ENCODE measurements at regions of chr19 and their contacts with region 1.

Region 1: DNA sequence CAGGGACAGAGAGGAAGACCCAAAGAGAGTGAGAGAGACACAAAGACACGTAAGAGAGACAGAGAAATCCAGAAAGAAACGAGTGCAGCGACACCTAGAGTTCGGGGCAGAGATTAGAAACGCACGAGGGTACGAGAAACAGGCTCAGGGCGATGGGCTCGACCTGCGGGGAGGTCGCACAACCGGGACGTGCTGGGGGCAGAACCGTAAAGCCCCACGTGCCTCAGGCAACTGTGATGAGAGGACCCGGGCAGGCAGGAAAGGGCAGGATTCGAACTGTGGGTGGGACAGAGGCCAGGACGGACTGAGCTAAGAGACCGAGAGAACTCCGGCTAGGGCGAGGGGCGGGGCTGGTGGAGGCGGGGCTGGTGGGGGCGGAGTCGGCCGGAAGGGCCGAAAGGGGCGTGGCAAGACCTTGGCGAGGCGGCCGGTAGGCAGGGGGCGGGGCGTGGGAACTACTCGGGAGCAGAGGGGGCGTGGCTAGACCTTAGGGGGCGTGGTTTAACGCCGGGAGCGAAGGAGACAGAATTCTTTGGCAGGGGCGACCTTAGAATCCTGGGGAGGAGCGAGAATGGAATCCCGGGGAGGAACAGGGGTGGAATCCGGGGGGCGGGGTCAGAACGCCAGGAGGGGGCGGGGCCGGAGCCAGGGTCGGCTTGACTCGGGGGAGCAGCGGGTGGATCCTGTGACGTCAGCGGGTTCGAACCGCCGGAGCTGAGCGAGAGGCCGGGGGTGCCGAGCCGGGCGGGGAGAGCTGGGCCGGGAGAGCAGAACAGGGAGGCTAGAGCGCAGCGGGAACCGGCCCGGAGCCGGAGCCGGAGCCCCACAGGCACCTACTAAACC is at the start of gene NECTIN2:
- DNase-seq: peak; percentile 97 to 100
- H3K4me3 ChIP-seq: peak within 1 kb of the TSS; percentile 97 to 99
- H3K27ac ChIP-seq: peak within 1 kb of the TSS; percentile 96 to 98
- H3K4me1 ChIP-seq: peaks cover 8 to 26% of the 10 kb centered on the region in 2 donors
- H3K27me3 ChIP-seq: no peaks in the 10 kb centered on the region
- CTCF ChIP-seq: peak; percentile 73 to 82 (median 80)
- total RNA-seq, gene NECTIN2: 125 TPM

Region 2: GRCh38 chr19:44782729-44783128 is 63.1 kb before region 1 on chr19:
- intact Hi-C with region 1: loop called (anchors 1 kb)
- DNase-seq: no peak
- H3K4me3 ChIP-seq: no peak overlapping the region
- H3K27ac ChIP-seq: no peak overlapping the region
- H3K4me1 ChIP-seq: peaks cover 0 to 3% of the 10 kb centered on the region in 2 donors
- H3K27me3 ChIP-seq: no peaks in the 10 kb centered on the region
- CTCF ChIP-seq: no peak

Region 3: GRCh38 chr19:44808463-44809371 is 37.1 kb before region 1 on chr19 and contains the start of gene BCAM:
- intact Hi-C with region 1: loop called (anchors 2 kb)
- DNase-seq: peak in 1 of 2 donors; percentile 87
- H3K4me3 ChIP-seq: peak within 1 kb of the TSS; percentile 74 to 88
- H3K27ac ChIP-seq: peak within 1 kb of the TSS; percentile 77 to 79
- H3K4me1 ChIP-seq: peaks cover 7 to 40% of the 10 kb centered on the region in 2 donors
- H3K27me3 ChIP-seq: no peaks in the 10 kb centered on the region
- CTCF ChIP-seq: no peak
- total RNA-seq, gene BCAM: 832 TPM

Region 4: DNA sequence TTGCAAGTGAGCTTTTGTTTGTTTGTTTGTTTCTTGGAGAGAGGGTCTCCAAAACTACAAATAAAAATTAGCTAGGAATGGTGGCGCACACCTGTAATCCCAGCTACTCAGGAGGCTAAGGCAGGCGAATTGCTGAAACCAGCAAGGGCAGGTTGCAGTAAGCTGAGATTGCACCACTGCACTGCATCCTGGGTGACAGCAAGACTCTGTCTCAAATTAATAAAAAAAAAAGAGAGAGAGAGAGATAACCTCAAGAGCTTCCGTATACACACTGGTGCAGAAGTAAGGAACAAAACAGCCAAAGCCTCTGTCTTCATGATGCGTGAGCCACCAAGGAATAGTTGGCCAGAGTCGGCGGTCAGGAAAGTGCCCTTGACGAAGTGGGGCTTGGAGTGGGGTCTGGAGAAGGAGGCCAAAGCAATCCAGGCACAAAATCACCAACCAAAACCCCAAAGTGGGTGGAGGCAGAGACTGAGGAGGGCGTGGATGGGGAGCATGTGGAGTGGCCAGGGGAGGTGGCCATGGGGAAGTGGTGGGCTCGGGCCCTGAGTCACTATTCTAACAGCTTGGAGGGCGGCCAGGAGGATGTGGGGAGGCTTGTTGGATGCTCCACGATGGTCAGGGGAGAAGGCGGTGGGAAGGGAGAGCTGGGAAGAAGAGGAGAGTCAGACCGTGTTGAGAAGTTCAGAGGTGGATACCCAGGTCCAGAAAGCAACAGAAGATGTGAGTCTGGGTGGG is 24.1 kb after region 1 on chr19:
- intact Hi-C with region 1: no loop called
- DNase-seq: peak in 1 of 2 donors; percentile 81
- H3K4me3 ChIP-seq: no peak overlapping the region
- H3K27ac ChIP-seq: peak overlapping the region in 1 of 2 donors; percentile 45
- H3K4me1 ChIP-seq: no peaks in the 10 kb centered on the region
- H3K27me3 ChIP-seq: no peaks in the 10 kb centered on the region
- CTCF ChIP-seq: no peak

Region 5: GRCh38 chr19:44890366-44891015 is 44.7 kb after region 1 on chr19:
- intact Hi-C with region 1: loop called (anchors 1 kb)
- DNase-seq: peak; percentile 100
- H3K4me3 ChIP-seq: peak overlapping the region; percentile 65 to 72
- H3K27ac ChIP-seq: peak overlapping the region; percentile 92 to 97
- H3K4me1 ChIP-seq: peaks cover 12 to 19% of the 10 kb centered on the region in 2 donors
- H3K27me3 ChIP-seq: no peaks in the 10 kb centered on the region
- CTCF ChIP-seq: no peak